Naive thymus-derived CD4-positive, alpha-beta T cell (primary cell): ENCODE measurements at regions of chr17 and their contacts with region 1.

Region 1: GRCh38 chr17:28371245-28372202 is at the start of gene SARM1:
- DNase-seq: peak; percentile 52 to 90 (median 64)
- ATAC-seq: peak; percentile 91
- H3K4me3 ChIP-seq: peak within 1 kb of the TSS; percentile 78
- H3K4me3 Mint-ChIP-seq: peak within 1 kb of the TSS; percentile 88 to 98 (median 94)
- H3K27ac ChIP-seq: peak within 1 kb of the TSS; percentile 88
- H3K27ac Mint-ChIP-seq: peak within 1 kb of the TSS; percentile 66 to 97 (median 93)
- H3K4me1 ChIP-seq: peaks cover 9 to 11% of the 10 kb centered on the region in 2 donors
- H3K4me1 Mint-ChIP-seq: peaks cover 10 to 25% (median 18%) of the 10 kb centered on the region in 7 donors
- H3K27me3 ChIP-seq: no peaks in the 10 kb centered on the region
- H3K27me3 Mint-ChIP-seq: no peaks in the 10 kb centered on the region
- total RNA-seq, gene SARM1: 21.8 to 34.1 (median 27.2) TPM

Region 2: GRCh38 chr17:28041068-28041843 is 330.3 kb before region 1 on chr17:
- CTCF ChIA-PET with region 1: no interaction called
- POLR2A ChIA-PET with region 1: no interaction called
- intact Hi-C with region 1: loop called in 1 of 2 experiments (anchors 1 kb)
- DNase-seq: peak; percentile 94 to 99 (median 99)
- ATAC-seq: peak; percentile 96
- H3K4me3 ChIP-seq: peak overlapping the region; percentile 45
- H3K4me3 Mint-ChIP-seq: peak overlapping the region; percentile 82 to 92 (median 88)
- H3K27ac ChIP-seq: peak overlapping the region; percentile 71
- H3K27ac Mint-ChIP-seq: peak overlapping the region; percentile 75 to 93 (median 88)
- H3K4me1 ChIP-seq: peaks cover 28 to 40% of the 10 kb centered on the region in 2 donors
- H3K4me1 Mint-ChIP-seq: peaks cover 35 to 65% (median 60%) of the 10 kb centered on the region in 7 donors
- H3K27me3 ChIP-seq: no peaks in the 10 kb centered on the region
- H3K27me3 Mint-ChIP-seq: peaks cover 0 to 16% (median 0%) of the 10 kb centered on the region in 5 donors

Region 3: DNA sequence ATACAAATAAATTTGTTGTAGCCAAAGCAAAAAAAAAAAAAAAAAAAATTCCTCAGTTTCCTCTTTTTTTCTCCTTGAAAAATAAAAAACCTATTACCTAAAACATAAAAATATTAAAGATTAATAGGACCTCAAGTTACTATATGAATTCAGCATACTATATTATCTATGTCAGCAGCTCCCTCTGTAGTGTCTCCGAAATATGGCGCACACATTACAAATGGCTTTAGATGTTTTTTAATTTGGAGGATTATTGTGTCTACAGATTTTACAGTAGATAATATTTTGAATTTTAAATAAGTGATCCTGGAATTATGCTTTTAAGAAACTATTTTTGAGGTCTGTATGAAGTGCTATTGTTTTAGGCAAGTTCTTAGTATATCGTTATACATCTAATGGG is 234.6 kb before region 1 on chr17:
- CTCF ChIA-PET with region 1: no interaction called
- POLR2A ChIA-PET with region 1: no interaction called
- intact Hi-C with region 1: no loop called
- DNase-seq: no peak
- ATAC-seq: no peak
- H3K4me3 ChIP-seq: no peak overlapping the region
- H3K4me3 Mint-ChIP-seq: no peak overlapping the region
- H3K27ac ChIP-seq: no peak overlapping the region
- H3K27ac Mint-ChIP-seq: no peak overlapping the region
- H3K4me1 ChIP-seq: no peaks in the 10 kb centered on the region
- H3K4me1 Mint-ChIP-seq: peaks cover 0 to 2% (median 0%) of the 10 kb centered on the region in 7 donors
- H3K27me3 ChIP-seq: no peaks in the 10 kb centered on the region
- H3K27me3 Mint-ChIP-seq: no peaks in the 10 kb centered on the region

Region 4: GRCh38 chr17:28357061-28357900 is 14.2 kb before region 1 on chr17 and contains the start of gene POLDIP2:
- CTCF ChIA-PET with region 1: interaction called, 3 read pairs
- POLR2A ChIA-PET with region 1: interaction called, 17 read pairs
- intact Hi-C with region 1: loop called (anchors 1 kb)
- DNase-seq: peak; percentile 94 to 97 (median 96)
- ATAC-seq: peak; percentile 99
- H3K4me3 ChIP-seq: peak within 1 kb of the TSS; percentile 80
- H3K4me3 Mint-ChIP-seq: peak within 1 kb of the TSS; percentile 91 to 98 (median 94)
- H3K27ac ChIP-seq: peak within 1 kb of the TSS; percentile 90
- H3K27ac Mint-ChIP-seq: peak within 1 kb of the TSS; percentile 89 to 97 (median 94)
- H3K4me1 ChIP-seq: peaks cover 17 to 21% of the 10 kb centered on the region in 2 donors
- H3K4me1 Mint-ChIP-seq: peaks cover 19 to 40% (median 29%) of the 10 kb centered on the region in 7 donors
- H3K27me3 ChIP-seq: no peaks in the 10 kb centered on the region
- H3K27me3 Mint-ChIP-seq: no peaks in the 10 kb centered on the region
- total RNA-seq, gene POLDIP2: 27.9 to 64.9 (median 29.8) TPM

Region 5: GRCh38 chr17:28405632-28406472 is 34.3 kb after region 1 on chr17 and contains the start of gene SLC46A1:
- CTCF ChIA-PET with region 1: no interaction called
- POLR2A ChIA-PET with region 1: no interaction called
- intact Hi-C with region 1: loop called in 1 of 2 experiments (anchors 5 kb)
- DNase-seq: peak in 7 of 9 donors; percentile 21 to 69 (median 30)
- ATAC-seq: peak; percentile 70
- H3K4me3 ChIP-seq: peak within 1 kb of the TSS; percentile 27
- H3K4me3 Mint-ChIP-seq: peak within 1 kb of the TSS; percentile 80 to 88 (median 83)
- H3K27ac ChIP-seq: peak within 1 kb of the TSS; percentile 52
- H3K27ac Mint-ChIP-seq: peak within 1 kb of the TSS in 5 of 9 donors; percentile 48 to 81 (median 68)
- H3K4me1 ChIP-seq: peaks cover 0 to 9% of the 10 kb centered on the region in 2 donors
- H3K4me1 Mint-ChIP-seq: peaks cover 4 to 18% (median 13%) of the 10 kb centered on the region in 7 donors
- H3K27me3 ChIP-seq: no peaks in the 10 kb centered on the region
- H3K27me3 Mint-ChIP-seq: peaks cover 0 to 24% (median 8%) of the 10 kb centered on the region in 5 donors
- total RNA-seq, gene SLC46A1: 1.9 to 5.1 (median 3.6) TPM

Region 6: DNA sequence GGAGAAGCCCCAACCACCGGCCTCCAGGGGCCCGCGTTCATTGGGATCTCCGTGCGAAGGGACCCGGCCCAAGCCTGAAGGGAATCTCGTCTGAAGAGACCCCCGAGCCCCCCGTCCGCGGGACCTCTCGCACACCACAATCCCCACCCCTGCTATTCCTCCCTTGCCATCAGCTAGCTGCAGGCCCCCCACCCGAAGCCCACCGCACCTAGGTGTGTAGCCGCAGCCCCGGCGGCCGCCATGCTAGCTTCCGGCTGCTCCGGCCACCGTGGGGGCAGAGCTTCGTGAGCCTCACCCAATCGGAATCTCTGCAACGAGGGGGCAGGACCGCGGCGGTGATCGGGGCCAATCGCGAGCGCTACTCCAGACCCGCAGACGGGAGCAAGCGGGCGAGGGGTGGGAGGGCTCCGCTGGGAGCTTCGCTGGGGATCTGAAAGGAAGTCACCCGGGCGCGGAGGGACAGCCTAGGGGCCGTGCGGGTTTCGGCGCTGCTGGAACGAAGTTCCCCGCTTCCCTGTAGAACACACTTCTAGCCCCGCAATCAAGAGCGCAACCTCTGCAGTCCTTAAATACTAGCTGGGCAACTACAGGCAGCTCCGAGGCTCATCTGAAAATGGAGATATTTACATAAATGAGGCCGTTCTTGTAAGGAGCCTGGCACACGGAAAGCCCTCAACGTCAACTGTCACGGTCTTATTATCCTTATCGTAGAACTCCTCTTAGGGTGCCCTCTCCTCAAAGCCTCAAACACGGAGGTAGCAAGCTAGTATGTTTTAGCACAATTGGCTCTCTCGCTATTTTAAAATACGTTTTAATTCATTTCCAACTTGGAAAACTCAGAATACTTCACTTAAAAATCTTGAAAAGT is 200.0 kb after region 1 on chr17 and contains the start of gene PIGS:
- CTCF ChIA-PET with region 1: no interaction called
- POLR2A ChIA-PET with region 1: no interaction called
- intact Hi-C with region 1: loop called in 1 of 2 experiments (anchors 10 kb)
- DNase-seq: peak; percentile 72 to 93 (median 84)
- ATAC-seq: peak; percentile 99
- H3K4me3 ChIP-seq: peak within 1 kb of the TSS; percentile 78
- H3K4me3 Mint-ChIP-seq: peak within 1 kb of the TSS; percentile 93 to 99 (median 96)
- H3K27ac ChIP-seq: peak within 1 kb of the TSS; percentile 90
- H3K27ac Mint-ChIP-seq: peak within 1 kb of the TSS; percentile 84 to 97 (median 93)
- H3K4me1 ChIP-seq: peaks cover 28 to 31% of the 10 kb centered on the region in 2 donors
- H3K4me1 Mint-ChIP-seq: peaks cover 49 to 76% (median 68%) of the 10 kb centered on the region in 7 donors
- H3K27me3 ChIP-seq: no peaks in the 10 kb centered on the region
- H3K27me3 Mint-ChIP-seq: no peaks in the 10 kb centered on the region
- total RNA-seq, gene PIGS: 58.5 to 71.2 (median 62.4) TPM